ENCODE measurements at regions of chr4 and their contacts with region 1.

Region 1: GRCh38 chr4:15756361-15756861 is 21.7 kb upstream of the CD38 start:
- DNase-seq: peak; percentile 73
- H3K4me3 Mint-ChIP-seq: peak overlapping the region; percentile 76
- H3K27ac Mint-ChIP-seq: peak overlapping the region; percentile 94
- H3K4me1 Mint-ChIP-seq: peaks cover 54% of the 10 kb centered on the region
- H3K27me3 Mint-ChIP-seq: no peaks in the 10 kb centered on the region

Region 2: DNA sequence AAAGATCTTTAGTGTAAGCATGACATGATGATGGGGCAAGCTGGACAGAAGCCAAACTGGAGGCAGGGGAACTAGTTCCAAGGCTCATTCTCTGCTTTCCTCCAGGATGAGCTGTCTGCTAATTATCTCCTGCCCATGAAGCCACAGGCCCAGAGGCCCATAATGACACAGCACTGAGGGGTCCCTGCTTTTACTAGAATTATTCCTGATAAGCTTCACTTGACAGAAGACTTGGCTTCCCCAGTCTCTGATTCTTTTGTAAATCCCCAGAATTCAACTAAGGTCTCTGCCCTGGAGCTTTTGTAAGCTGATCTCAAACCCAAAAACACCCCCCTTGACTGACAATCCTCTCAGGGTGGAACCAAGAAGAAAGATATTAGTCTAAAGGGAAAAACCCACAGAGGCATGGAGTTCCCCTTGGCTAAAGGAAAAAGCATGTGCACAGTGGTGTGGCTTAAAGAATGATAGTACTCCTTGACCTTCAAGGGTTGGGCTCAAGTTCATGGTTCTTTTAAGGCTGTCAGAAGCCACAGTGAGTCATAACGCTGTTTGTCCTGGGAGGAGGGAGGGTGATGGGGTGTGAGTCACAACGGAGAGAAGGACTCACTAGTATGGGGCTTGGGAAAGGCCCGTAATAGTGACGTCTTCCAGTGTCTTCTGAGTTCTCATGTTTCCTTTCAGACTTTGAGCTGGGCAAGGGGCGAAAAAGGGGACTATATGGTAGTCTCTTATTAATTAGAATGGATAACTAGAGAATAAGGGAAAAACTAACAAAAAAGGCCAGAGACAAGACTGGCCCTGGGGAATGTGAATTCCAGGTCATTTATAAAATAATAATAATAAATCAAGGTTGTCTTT is 900.1 kb before region 1 on chr4:
- intact Hi-C with region 1: loop called (anchors 1 kb)
- DNase-seq: peak; percentile 61
- H3K4me3 Mint-ChIP-seq: no peak overlapping the region
- H3K27ac Mint-ChIP-seq: peak overlapping the region; percentile 80
- H3K4me1 Mint-ChIP-seq: peaks cover 52% of the 10 kb centered on the region
- H3K27me3 Mint-ChIP-seq: no peaks in the 10 kb centered on the region

Region 3: DNA sequence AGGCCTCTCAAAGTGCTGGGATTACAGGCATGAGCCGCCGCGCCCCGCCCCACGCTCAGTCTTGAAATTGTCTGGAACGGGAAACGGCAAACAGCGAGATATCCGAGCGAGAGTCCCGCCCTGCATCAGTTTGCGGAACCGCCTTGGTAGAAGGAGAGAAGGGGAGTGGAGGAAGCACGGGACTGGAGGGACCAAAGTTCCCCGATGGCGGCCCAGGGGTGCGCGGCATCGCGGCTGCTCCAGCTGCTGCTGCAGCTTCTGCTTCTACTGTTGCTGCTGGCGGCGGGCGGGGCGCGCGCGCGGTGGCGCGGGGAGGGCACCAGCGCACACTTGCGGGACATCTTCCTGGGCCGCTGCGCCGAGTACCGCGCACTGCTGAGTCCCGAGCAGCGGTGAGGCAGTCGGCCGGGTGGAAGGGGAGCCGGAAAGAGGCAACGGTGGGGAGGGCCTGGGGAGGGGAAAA is 53.4 kb before region 1 on chr4 and contains the start of gene BST1:
- intact Hi-C with region 1: loop called (anchors 2 kb)
- DNase-seq: peak; percentile 41
- H3K4me3 Mint-ChIP-seq: peak within 1 kb of the TSS; percentile 87
- H3K27ac Mint-ChIP-seq: no peak within 1 kb of the TSS
- H3K4me1 Mint-ChIP-seq: no peaks in the 10 kb centered on the region
- H3K27me3 Mint-ChIP-seq: peaks cover 25% of the 10 kb centered on the region
- total RNA-seq, gene BST1: 0.81 and 0.93 TPM in 2 replicates

Region 4: GRCh38 chr4:15746110-15746509 is 10.3 kb before region 1 on chr4:
- intact Hi-C with region 1: loop called (anchors 1 kb)
- DNase-seq: no peak
- H3K4me3 Mint-ChIP-seq: no peak overlapping the region
- H3K27ac Mint-ChIP-seq: no peak overlapping the region
- H3K4me1 Mint-ChIP-seq: peaks cover 26% of the 10 kb centered on the region
- H3K27me3 Mint-ChIP-seq: no peaks in the 10 kb centered on the region

Region 5: GRCh38 chr4:15794905-15795304 is 38.5 kb after region 1 on chr4:
- intact Hi-C with region 1: loop called (anchors 1 kb)
- DNase-seq: no peak
- H3K4me3 Mint-ChIP-seq: peak overlapping the region; percentile 23
- H3K27ac Mint-ChIP-seq: peak overlapping the region; percentile 92
- H3K4me1 Mint-ChIP-seq: peaks cover 73% of the 10 kb centered on the region
- H3K27me3 Mint-ChIP-seq: no peaks in the 10 kb centered on the region

Region 6: DNA sequence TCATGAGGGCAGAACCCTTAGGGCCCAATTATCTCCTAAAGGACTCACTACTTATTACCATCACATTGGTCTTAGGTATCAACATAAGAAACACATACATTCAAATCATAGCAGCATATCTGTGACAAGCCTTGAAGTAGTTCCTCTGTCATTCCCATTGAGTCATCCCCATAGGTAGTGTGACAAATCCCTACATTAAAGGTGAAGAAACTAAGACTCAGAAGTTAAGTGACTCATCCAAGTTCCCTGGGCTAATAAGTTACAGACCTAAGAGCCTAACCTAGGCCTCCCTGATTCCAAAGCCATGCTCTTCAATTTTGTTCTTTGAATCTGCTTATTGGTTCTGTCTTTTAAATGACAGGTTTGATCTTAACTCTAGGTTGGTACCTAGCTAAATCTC is 80.0 kb after region 1 on chr4:
- intact Hi-C with region 1: no loop called
- DNase-seq: no peak
- H3K4me3 Mint-ChIP-seq: no peak overlapping the region
- H3K27ac Mint-ChIP-seq: peak overlapping the region; percentile 18
- H3K4me1 Mint-ChIP-seq: peaks cover 34% of the 10 kb centered on the region
- H3K27me3 Mint-ChIP-seq: no peaks in the 10 kb centered on the region

Region 7: GRCh38 chr4:17576932-17577665 is 1820.7 kb after region 1 on chr4 and contains the start of gene LAP3:
- intact Hi-C with region 1: loop called (anchors 5 kb)
- DNase-seq: peak; percentile 98
- H3K4me3 Mint-ChIP-seq: peak within 1 kb of the TSS; percentile 93
- H3K27ac Mint-ChIP-seq: peak within 1 kb of the TSS; percentile 94
- H3K4me1 Mint-ChIP-seq: peaks cover 38% of the 10 kb centered on the region
- H3K27me3 Mint-ChIP-seq: no peaks in the 10 kb centered on the region
- total RNA-seq, gene LAP3: 108 and 109 TPM in 2 replicates

Measured in activated T-helper 1 cell treated with anti-CD3 and anti-CD28 coated beads, Interleukin-12 subunit alpha, Interleukin-12 subunit beta, Interleukin-2, Interleukin-4 antibody, amounts not matched to agents 30 ng/mL and 10 ng/mL and 1 ng/mL, durations not matched to agents 14 hours and 24 hours and 36 hours (primary cell).